ENCODE measurements at regions of chr2 and their contacts with region 1.

Region 1: DNA sequence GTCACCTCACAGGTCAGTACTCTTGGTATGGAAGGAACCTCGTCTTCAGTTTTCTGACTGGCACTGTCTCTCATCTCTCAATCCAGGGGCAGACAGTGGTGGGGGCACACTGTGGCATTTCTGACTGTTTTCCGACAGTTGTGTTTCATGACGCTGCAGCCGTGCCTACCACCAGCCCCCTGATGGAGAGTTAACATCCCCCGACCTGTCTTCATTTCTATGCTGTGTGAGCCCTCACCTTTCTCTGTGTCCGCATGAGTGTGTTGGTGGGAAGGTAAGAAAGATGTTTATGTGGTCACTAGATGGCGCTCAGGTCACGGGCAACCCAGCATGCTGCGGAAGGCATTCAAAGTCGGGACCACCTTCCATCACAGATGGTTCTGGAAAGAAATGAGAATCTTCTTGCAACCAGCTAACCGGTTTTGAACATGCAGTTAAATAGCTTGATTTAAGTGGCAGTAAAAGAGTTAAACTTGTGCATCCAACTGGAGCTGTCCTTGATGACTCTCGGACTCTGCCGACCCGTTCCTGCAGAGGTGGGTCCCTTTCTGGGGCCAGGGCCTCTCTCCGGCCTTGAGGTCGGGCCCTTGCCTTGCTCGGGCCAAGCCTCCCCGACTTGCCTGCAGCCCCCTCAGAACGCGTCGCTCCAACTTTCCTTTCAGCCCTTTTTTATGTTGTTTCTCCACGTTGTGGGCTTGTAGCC is 92.4 kb downstream of the DYSF start:
- DNase-seq: peak; percentile 64 to 72
- H3K4me3 ChIP-seq: no peak overlapping the region
- H3K4me3 Mint-ChIP-seq: no peak overlapping the region
- H3K27ac Mint-ChIP-seq: no peak overlapping the region
- H3K4me1 ChIP-seq: no peaks in the 10 kb centered on the region
- H3K4me1 Mint-ChIP-seq: peaks cover 7% of the 10 kb centered on the region
- H3K27me3 ChIP-seq: no peaks in the 10 kb centered on the region
- H3K27me3 Mint-ChIP-seq: peaks cover 4% of the 10 kb centered on the region
- CTCF ChIP-seq: peak; percentile 75 to 85

Region 2: DNA sequence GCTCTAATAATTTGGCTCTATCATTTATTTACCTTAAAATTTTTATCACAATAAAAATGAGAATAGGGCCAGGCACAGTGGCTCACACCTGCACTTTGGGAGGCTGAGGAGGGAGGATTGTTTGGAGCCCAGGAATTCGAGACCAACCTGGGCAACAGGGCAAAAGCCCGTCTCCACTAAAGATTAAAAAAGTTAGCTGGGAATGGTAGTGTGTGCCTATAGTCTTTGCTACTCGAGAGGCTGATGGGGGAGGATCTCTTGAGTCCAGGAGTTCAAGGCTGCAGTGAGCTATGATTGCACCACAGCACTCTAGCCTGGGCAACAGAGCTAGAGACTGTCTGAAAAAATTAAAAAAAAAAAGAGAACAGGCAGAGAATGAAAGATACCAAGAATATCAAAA is 409.5 kb before region 1 on chr2:
- CTCF ChIA-PET with region 1: no interaction called
- POLR2A ChIA-PET with region 1: no interaction called
- intact Hi-C with region 1: no loop called
- DNase-seq: no peak
- H3K4me3 ChIP-seq: no peak overlapping the region
- H3K4me3 Mint-ChIP-seq: no peak overlapping the region
- H3K27ac Mint-ChIP-seq: no peak overlapping the region
- H3K4me1 ChIP-seq: no peaks in the 10 kb centered on the region
- H3K4me1 Mint-ChIP-seq: no peaks in the 10 kb centered on the region
- H3K27me3 ChIP-seq: no peaks in the 10 kb centered on the region
- H3K27me3 Mint-ChIP-seq: no peaks in the 10 kb centered on the region
- CTCF ChIP-seq: no peak

Region 3: DNA sequence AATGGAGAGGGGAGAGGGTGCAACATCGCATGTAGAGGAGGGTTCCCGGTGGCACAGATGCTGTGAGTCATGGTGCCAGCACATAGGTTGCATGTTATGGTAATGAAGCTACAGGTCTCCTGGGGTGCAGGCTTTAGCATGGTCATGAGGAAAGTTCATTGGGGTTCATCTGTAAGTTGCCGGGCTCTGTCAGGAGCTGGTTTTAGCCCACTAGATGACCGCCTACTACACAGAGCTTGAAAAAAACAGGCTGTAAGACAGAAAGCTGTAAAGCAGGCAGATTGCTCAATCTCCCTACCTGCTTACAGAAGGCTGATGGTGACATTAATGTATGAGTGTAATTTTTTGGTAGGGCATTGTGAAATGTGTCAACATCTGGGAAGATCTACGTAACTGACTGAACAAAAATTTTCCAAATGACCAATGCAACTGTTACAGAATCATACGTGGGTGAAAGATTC is 68.5 kb before region 1 on chr2:
- CTCF ChIA-PET with region 1: no interaction called
- POLR2A ChIA-PET with region 1: no interaction called
- intact Hi-C with region 1: no loop called
- DNase-seq: peak in 1 of 2 experiments; percentile 25
- H3K4me3 ChIP-seq: no peak overlapping the region
- H3K4me3 Mint-ChIP-seq: no peak overlapping the region
- H3K27ac Mint-ChIP-seq: no peak overlapping the region
- H3K4me1 ChIP-seq: peaks cover 5% of the 10 kb centered on the region; the same call in 1 of the 2 replicates
- H3K4me1 Mint-ChIP-seq: peaks cover 12% of the 10 kb centered on the region
- H3K27me3 ChIP-seq: no peaks in the 10 kb centered on the region
- H3K27me3 Mint-ChIP-seq: peaks cover 2% of the 10 kb centered on the region
- CTCF ChIP-seq: no peak

Region 4: DNA sequence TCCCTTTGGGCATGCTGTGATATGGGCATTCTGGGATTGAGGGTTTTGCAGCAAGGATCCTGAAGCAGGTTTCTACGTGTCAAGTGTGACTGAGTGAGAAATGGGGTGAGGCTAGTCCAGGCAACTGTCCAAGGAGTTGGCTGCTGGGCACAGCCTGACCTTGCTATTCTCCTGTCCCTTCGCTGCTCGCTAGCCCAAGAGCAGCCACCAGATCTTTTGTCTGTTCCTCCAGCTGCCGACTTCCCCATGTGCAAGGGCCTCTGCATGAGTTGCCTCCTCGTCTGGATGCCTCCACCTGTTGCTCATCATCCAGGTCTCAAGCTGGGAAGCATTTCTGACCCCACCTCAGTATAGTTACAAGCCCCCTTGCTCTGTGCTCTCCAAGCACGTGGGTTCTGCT is 21.2 kb before region 1 on chr2:
- CTCF ChIA-PET with region 1: no interaction called
- POLR2A ChIA-PET with region 1: no interaction called
- intact Hi-C with region 1: no loop called
- DNase-seq: no peak
- H3K4me3 ChIP-seq: no peak overlapping the region
- H3K4me3 Mint-ChIP-seq: no peak overlapping the region
- H3K27ac Mint-ChIP-seq: no peak overlapping the region
- H3K4me1 ChIP-seq: no peaks in the 10 kb centered on the region
- H3K4me1 Mint-ChIP-seq: no peaks in the 10 kb centered on the region
- H3K27me3 ChIP-seq: no peaks in the 10 kb centered on the region
- H3K27me3 Mint-ChIP-seq: peaks cover 18% of the 10 kb centered on the region
- CTCF ChIP-seq: no peak

Region 5: GRCh38 chr2:71563872-71564271 is 18.1 kb after region 1 on chr2:
- CTCF ChIA-PET with region 1: no interaction called
- POLR2A ChIA-PET with region 1: no interaction called
- intact Hi-C with region 1: no loop called
- DNase-seq: no peak
- H3K4me3 ChIP-seq: no peak overlapping the region
- H3K4me3 Mint-ChIP-seq: no peak overlapping the region
- H3K27ac Mint-ChIP-seq: no peak overlapping the region
- H3K4me1 ChIP-seq: no peaks in the 10 kb centered on the region
- H3K4me1 Mint-ChIP-seq: no peaks in the 10 kb centered on the region
- H3K27me3 ChIP-seq: no peaks in the 10 kb centered on the region
- H3K27me3 Mint-ChIP-seq: no peaks in the 10 kb centered on the region
- CTCF ChIP-seq: no peak

Region 6: DNA sequence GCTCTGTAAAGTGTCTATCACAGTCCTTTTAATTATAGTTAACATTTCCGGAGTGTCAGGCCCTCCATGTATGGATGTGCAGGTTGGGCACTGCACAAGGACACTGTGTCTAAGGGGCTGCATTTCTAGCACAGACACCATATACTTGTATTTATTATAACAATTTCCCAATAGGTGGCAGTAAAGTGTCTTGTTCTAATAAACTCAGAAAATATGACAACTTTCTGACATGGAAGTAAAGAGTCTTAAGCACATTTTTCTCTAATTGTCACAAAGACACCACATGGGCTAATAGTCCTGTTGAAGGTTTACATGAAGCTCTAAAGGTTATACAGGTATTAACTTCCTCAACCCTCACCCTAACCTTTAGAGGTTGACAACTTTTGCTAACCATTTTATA is 64.2 kb after region 1 on chr2:
- CTCF ChIA-PET with region 1: no interaction called
- POLR2A ChIA-PET with region 1: no interaction called
- intact Hi-C with region 1: loop called (anchors 5 kb)
- DNase-seq: no peak
- H3K4me3 ChIP-seq: no peak overlapping the region
- H3K4me3 Mint-ChIP-seq: no peak overlapping the region
- H3K27ac Mint-ChIP-seq: no peak overlapping the region
- H3K4me1 ChIP-seq: no peaks in the 10 kb centered on the region
- H3K4me1 Mint-ChIP-seq: no peaks in the 10 kb centered on the region
- H3K27me3 ChIP-seq: no peaks in the 10 kb centered on the region; the same call in 1 of the 2 replicates
- H3K27me3 Mint-ChIP-seq: peaks cover 8% of the 10 kb centered on the region
- CTCF ChIP-seq: peak in 1 of 2 experiments; percentile 53

Region 7: GRCh38 chr2:71995067-71995665 is 449.4 kb after region 1 on chr2:
- CTCF ChIA-PET with region 1: no interaction called
- POLR2A ChIA-PET with region 1: no interaction called
- intact Hi-C with region 1: loop called (anchors 5 kb)
- DNase-seq: peak in 1 of 2 experiments; percentile 23
- H3K4me3 ChIP-seq: no peak overlapping the region
- H3K4me3 Mint-ChIP-seq: no peak overlapping the region
- H3K27ac Mint-ChIP-seq: no peak overlapping the region
- H3K4me1 ChIP-seq: no peaks in the 10 kb centered on the region
- H3K4me1 Mint-ChIP-seq: no peaks in the 10 kb centered on the region
- H3K27me3 ChIP-seq: no peaks in the 10 kb centered on the region
- H3K27me3 Mint-ChIP-seq: no peaks in the 10 kb centered on the region
- CTCF ChIP-seq: peak; percentile 53 to 58